GM12878 (cell line): ENCODE measurements at regions of chr7 and their contacts with region 1.

Region 1: GRCh38 chr7:120554960-120555571 is 282.1 kb downstream of the KCND2 start:
- DNase-seq: peak; percentile 45
- ATAC-seq: peak; percentile 85
- H3K4me3 ChIP-seq: no peak overlapping the region
- H3K27ac ChIP-seq: no peak overlapping the region
- H3K4me1 ChIP-seq: peaks cover 14% of the 10 kb centered on the region
- H3K27me3 ChIP-seq: no peaks in the 10 kb centered on the region
- CTCF ChIP-seq: peak; percentile 66 to 89 (median 69)
- EP300 ChIP-seq: no peak
- POLR2A ChIP-seq: no peak
- RAD21 ChIP-seq: peak; percentile 98

Region 2: GRCh38 chr7:119935418-119936025 is 619.5 kb before region 1 on chr7:
- CTCF ChIA-PET with region 1: interaction called, 27 read pairs
- POLR2A ChIA-PET with region 1: no interaction called
- RAD21 ChIA-PET with region 1: interaction called, 20 read pairs
- SMC1A ChIA-PET with region 1: interaction called, 23 read pairs
- in situ Hi-C with region 1: loop called (anchors 5 kb)
- intact Hi-C with region 1: loop called (anchors 1 kb)
- DNase-seq: no peak
- ATAC-seq: peak; percentile 85
- H3K4me3 ChIP-seq: no peak overlapping the region
- H3K27ac ChIP-seq: no peak overlapping the region
- H3K4me1 ChIP-seq: no peaks in the 10 kb centered on the region
- H3K27me3 ChIP-seq: peaks cover 0 to 1% of the 10 kb centered on the region in 2 experiments; a peak in 2 of 4 replicates
- CTCF ChIP-seq: peak in 2 of 3 experiments; percentile 31 to 32; a peak in 3 of 6 replicates
- EP300 ChIP-seq: no peak
- POLR2A ChIP-seq: no peak
- RAD21 ChIP-seq: peak; percentile 57

Region 3: DNA sequence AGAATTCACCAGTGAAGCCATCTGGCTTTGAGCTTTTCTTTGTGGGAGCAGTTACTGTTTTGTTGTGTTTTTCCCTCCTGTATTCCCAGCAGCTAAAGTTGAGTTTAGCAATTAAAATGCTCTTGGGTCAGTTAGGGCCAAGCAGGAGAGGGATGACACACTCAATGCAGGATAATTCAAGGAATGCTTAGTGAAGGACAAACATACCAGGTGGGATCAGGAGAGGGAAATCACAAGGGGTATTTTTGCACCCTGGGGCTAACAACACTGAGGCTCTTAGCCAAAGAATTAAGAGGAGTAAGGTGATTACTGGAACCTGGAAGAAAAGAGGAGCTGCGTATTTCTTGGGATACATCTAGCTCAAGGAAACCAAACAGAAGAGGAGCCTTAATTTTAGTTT is 364.5 kb before region 1 on chr7:
- CTCF ChIA-PET with region 1: interaction called, 3 read pairs
- POLR2A ChIA-PET with region 1: no interaction called
- RAD21 ChIA-PET with region 1: no interaction called
- SMC1A ChIA-PET with region 1: no interaction called
- in situ Hi-C with region 1: no loop called
- intact Hi-C with region 1: loop called (anchors 10 kb)
- DNase-seq: no peak
- ATAC-seq: no peak
- H3K4me3 ChIP-seq: no peak overlapping the region
- H3K27ac ChIP-seq: no peak overlapping the region
- H3K4me1 ChIP-seq: no peaks in the 10 kb centered on the region
- H3K27me3 ChIP-seq: no peaks in the 10 kb centered on the region
- CTCF ChIP-seq: no peak
- EP300 ChIP-seq: no peak
- POLR2A ChIP-seq: no peak
- RAD21 ChIP-seq: no peak

Region 4: DNA sequence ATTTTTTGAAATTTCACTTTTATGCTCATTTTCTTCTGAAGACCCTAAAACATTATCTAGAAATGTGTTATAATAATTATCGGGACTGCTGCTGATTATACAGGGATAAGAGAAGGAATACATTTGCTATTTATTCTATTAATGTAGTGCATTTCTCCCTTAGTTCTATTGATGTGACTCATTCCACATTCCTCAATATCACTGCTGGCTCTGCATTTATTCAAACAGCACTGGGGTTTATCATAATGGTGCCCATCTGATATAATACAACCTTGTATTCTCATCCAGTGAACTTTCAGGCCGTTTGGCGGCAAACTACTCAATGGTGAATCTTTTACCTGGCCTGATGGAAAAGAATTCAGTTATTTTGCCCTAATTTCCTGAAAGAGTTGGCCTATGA is 274.3 kb before region 1 on chr7:
- CTCF ChIA-PET with region 1: interaction called, 20 read pairs
- POLR2A ChIA-PET with region 1: no interaction called
- RAD21 ChIA-PET with region 1: interaction called, 5 read pairs
- SMC1A ChIA-PET with region 1: interaction called, 22 read pairs
- in situ Hi-C with region 1: no loop called
- intact Hi-C with region 1: no loop called
- DNase-seq: no peak
- ATAC-seq: no peak
- H3K4me3 ChIP-seq: no peak overlapping the region
- H3K27ac ChIP-seq: no peak overlapping the region
- H3K4me1 ChIP-seq: no peaks in the 10 kb centered on the region
- H3K27me3 ChIP-seq: no peaks in the 10 kb centered on the region
- CTCF ChIP-seq: no peak
- EP300 ChIP-seq: no peak
- POLR2A ChIP-seq: no peak
- RAD21 ChIP-seq: no peak

Region 5: DNA sequence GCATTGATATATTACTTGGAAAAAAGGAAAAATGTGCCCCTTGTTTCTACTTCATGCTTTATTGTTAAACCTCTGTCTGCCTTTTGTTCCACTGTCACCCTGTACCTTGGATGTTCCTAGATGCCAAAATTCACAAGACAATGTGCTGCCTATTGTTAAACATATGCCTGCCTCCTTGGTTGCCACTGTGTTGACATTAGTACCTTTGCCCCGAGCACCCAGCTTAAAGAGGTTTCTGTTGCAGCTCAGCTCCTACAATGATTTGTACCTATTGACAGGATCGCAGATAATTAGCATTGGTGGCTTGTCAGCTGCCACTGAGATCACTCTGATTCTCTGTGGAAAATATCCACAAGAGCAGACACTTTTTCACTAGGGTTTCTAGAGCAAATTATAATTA is 94.1 kb before region 1 on chr7:
- CTCF ChIA-PET with region 1: no interaction called
- POLR2A ChIA-PET with region 1: no interaction called
- RAD21 ChIA-PET with region 1: no interaction called
- SMC1A ChIA-PET with region 1: no interaction called
- in situ Hi-C with region 1: no loop called
- intact Hi-C with region 1: no loop called
- DNase-seq: no peak
- ATAC-seq: peak; percentile 56
- H3K4me3 ChIP-seq: no peak overlapping the region
- H3K27ac ChIP-seq: no peak overlapping the region
- H3K4me1 ChIP-seq: peaks cover 2% of the 10 kb centered on the region; the same call in 1 of the 2 replicates
- H3K27me3 ChIP-seq: no peaks in the 10 kb centered on the region
- CTCF ChIP-seq: no peak
- EP300 ChIP-seq: no peak
- POLR2A ChIP-seq: no peak
- RAD21 ChIP-seq: no peak

Region 6: GRCh38 chr7:120703585-120704240 is 148.6 kb after region 1 on chr7:
- CTCF ChIA-PET with region 1: no interaction called
- POLR2A ChIA-PET with region 1: no interaction called
- RAD21 ChIA-PET with region 1: no interaction called
- SMC1A ChIA-PET with region 1: no interaction called
- in situ Hi-C with region 1: no loop called
- intact Hi-C with region 1: no loop called
- DNase-seq: no peak
- ATAC-seq: no peak
- H3K4me3 ChIP-seq: no peak overlapping the region
- H3K27ac ChIP-seq: no peak overlapping the region
- H3K4me1 ChIP-seq: no peaks in the 10 kb centered on the region
- H3K27me3 ChIP-seq: no peaks in the 10 kb centered on the region
- CTCF ChIP-seq: no peak
- EP300 ChIP-seq: no peak
- POLR2A ChIP-seq: no peak
- RAD21 ChIP-seq: no peak

Region 7: DNA sequence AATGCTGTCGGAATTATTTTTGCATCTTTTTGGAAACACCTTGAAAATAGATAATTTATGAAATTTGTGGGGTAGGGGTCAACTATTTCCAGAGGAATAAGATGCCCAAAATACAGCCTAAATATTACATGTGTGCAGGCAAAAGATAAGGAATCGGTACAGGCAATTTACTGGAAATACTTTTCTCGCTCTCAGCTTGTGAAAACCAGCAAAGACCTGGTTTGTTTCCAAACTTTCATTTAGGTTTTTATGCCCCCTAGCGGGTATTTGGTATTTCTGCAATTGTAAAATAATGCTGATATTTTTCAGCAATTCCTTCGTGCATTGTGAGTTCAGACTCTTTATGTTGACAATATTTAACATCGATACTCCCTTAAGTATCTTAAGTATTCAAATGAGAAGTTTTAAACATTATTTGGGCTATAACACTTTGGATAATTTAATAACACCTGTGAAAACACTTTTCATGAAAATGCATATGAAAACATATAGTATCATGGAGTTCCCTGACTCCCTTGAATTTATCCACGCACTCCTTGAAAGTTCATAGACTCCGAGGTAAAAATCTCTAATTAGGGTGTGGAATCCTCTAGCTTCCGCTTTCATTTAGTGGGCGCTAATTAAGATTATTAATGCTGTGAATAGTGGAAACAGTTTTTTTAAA is 170.4 kb after region 1 on chr7:
- CTCF ChIA-PET with region 1: interaction called, 3 read pairs
- POLR2A ChIA-PET with region 1: no interaction called
- RAD21 ChIA-PET with region 1: interaction called, 3 read pairs
- SMC1A ChIA-PET with region 1: interaction called, 4 read pairs
- in situ Hi-C with region 1: no loop called
- intact Hi-C with region 1: loop called (anchors 2 kb)
- DNase-seq: no peak
- ATAC-seq: peak; percentile 54
- H3K4me3 ChIP-seq: no peak overlapping the region
- H3K27ac ChIP-seq: no peak overlapping the region
- H3K4me1 ChIP-seq: no peaks in the 10 kb centered on the region; the same call in 1 of the 2 replicates
- H3K27me3 ChIP-seq: no peaks in the 10 kb centered on the region
- CTCF ChIP-seq: peak; percentile 54 to 59 (median 55); a peak in 5 of 6 replicates
- EP300 ChIP-seq: no peak
- POLR2A ChIP-seq: no peak
- RAD21 ChIP-seq: peak; percentile 87